SK-N-SH (cell line): ENCODE measurements at regions of chr17 and their contacts with region 1.

Region 1: DNA sequence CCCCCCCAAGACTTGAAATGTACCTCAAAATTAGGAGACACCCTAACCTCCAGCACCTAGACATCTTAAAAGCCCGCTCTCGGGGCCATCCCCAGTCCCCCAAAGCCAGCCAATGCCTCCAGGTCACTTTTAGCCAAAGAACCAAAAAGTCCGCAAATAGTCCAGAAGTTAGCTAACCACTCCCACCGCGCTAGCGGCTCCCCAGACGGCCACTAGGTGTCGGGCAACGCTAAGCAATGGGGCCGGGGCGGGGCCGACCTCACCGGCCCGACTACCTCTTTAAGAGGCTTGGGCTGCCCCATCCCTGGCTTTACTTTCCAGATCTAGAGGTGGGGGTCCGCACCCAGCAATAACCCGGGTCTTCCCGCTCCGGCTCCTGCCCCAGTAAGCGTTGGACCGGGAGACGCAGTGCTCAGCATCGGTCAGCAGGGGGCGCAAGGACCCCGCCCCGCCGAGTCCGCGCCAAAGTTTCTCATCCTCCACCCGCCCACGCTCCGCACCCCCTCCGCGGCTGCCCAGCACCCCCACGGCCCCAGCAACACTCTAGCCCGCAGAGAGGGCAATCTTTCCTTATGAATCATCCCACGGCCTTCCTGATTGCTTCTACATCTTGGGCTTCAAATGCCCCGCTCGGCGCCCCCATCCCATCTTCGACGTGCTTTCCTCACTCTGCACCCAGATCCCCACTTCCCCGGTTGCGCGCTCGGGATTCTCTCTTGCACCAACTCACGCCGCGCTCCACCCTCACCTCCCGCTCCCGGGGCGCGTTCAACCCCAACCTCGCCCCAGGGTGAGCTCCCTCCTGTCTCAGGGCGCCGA is 765 bp downstream of the COL1A1 start:
- DNase-seq: peak; percentile 95
- H3K4me3 ChIP-seq: peak overlapping the region; percentile 74 to 96
- H3K27ac ChIP-seq: peak overlapping the region; percentile 79 to 100
- H3K4me1 ChIP-seq: peaks cover 37 to 62% of the 10 kb centered on the region in 2 experiments
- H3K27me3 ChIP-seq: no peaks in the 10 kb centered on the region
- CTCF ChIP-seq: peak; percentile 100
- EP300 ChIP-seq: peak in 1 of 2 experiments; percentile 63; a peak in 2 of 4 replicates
- RAD21 ChIP-seq: peak; percentile 87

Region 2: GRCh38 chr17:49899191-49899485 is 301.5 kb before region 1 on chr17:
- CTCF ChIA-PET with region 1: no interaction called
- POLR2A ChIA-PET with region 1: no interaction called
- DNase-seq: no peak
- H3K4me3 ChIP-seq: no peak overlapping the region
- H3K27ac ChIP-seq: no peak overlapping the region
- H3K4me1 ChIP-seq: no peaks in the 10 kb centered on the region; a peak in 1 of 4 replicates
- H3K27me3 ChIP-seq: peaks cover 98% of the 10 kb centered on the region
- CTCF ChIP-seq: peak; percentile 35
- EP300 ChIP-seq: no peak
- RAD21 ChIP-seq: no peak; the same call in 1 of the 2 replicates

Region 3: DNA sequence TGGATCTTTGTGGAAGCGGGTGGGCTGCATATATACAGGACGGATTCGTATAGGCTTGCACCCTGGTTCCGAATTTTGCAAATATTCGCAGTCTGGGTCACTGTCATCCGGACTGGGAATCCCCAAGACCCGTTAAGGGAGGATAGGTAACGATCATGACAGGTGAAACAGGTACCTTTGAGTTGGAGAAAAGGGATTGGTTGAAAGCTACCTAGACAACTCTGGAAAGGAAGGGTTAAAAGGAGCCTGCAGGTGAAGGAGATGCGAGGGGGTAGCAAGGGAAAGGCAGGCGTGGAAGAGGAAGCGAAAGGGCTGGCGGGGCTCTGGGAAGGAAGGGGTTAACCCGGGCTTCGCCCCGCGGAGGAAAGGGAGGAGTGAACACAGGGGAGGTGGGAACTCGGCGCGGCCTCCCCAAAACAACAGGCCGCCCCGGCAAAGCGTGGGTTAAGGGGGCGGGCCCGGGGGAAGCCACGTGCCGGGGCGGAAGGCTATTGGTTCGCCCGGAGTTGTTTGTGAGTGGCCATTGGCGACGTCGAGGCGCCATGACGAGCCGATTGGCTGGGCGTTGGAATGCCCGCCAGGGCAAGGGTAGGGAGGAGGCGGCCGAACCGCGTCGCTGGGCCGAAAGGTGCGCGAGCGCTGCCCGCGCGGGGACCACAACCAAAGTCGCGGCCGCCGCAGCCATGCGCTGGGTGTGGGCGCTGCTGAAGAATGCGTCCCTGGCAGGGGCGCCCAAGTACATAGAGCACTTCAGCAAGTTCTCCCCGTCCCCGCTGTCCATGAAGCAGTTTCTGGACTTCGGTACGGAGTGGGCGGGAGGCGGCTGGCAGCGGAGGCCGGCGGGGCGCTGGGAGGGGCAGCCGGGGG is 105.7 kb before region 1 on chr17 and contains the start of gene PDK2:
- CTCF ChIA-PET with region 1: interaction called, 14 read pairs
- POLR2A ChIA-PET with region 1: no interaction called
- DNase-seq: peak; percentile 100
- H3K4me3 ChIP-seq: peak within 1 kb of the TSS; percentile 75 to 84
- H3K27ac ChIP-seq: peak within 1 kb of the TSS; percentile 64 to 83
- H3K4me1 ChIP-seq: peaks cover 3 to 18% of the 10 kb centered on the region in 2 experiments; a peak in 1 of 4 replicates
- H3K27me3 ChIP-seq: no peaks in the 10 kb centered on the region
- CTCF ChIP-seq: no peak
- EP300 ChIP-seq: peak in 1 of 2 experiments; percentile 5; a peak in 1 of 4 replicates
- RAD21 ChIP-seq: no peak
- polyA plus RNA-seq, gene PDK2: 96.1 and 124 TPM in 2 replicates

Region 4: GRCh38 chr17:50161023-50161910 is 39.4 kb before region 1 on chr17:
- CTCF ChIA-PET with region 1: interaction called, 517 read pairs
- POLR2A ChIA-PET with region 1: interaction called, 3 read pairs
- DNase-seq: peak; percentile 100
- H3K4me3 ChIP-seq: peak overlapping the region; percentile 60 to 72
- H3K27ac ChIP-seq: peak overlapping the region; percentile 3 to 91; a peak in 3 of 4 replicates
- H3K4me1 ChIP-seq: peaks cover 3 to 10% of the 10 kb centered on the region in 2 experiments; a peak in 1 of 4 replicates
- H3K27me3 ChIP-seq: no peaks in the 10 kb centered on the region
- CTCF ChIP-seq: peak; percentile 97
- EP300 ChIP-seq: peak in 1 of 2 experiments; percentile 44; a peak in 1 of 4 replicates
- RAD21 ChIP-seq: peak; percentile 72

Region 5: GRCh38 chr17:50213026-50214022 is 12.7 kb after region 1 on chr17:
- CTCF ChIA-PET with region 1: interaction called, 195 read pairs
- POLR2A ChIA-PET with region 1: interaction called, 3 read pairs
- DNase-seq: peak; percentile 56
- H3K4me3 ChIP-seq: no peak overlapping the region
- H3K27ac ChIP-seq: no peak overlapping the region
- H3K4me1 ChIP-seq: peaks cover 43 to 65% of the 10 kb centered on the region in 2 experiments
- H3K27me3 ChIP-seq: no peaks in the 10 kb centered on the region
- CTCF ChIP-seq: peak; percentile 55
- EP300 ChIP-seq: no peak
- RAD21 ChIP-seq: peak; percentile 39; the same call in 1 of the 2 replicates

Region 6: GRCh38 chr17:50279181-50279526 is 78.5 kb after region 1 on chr17:
- CTCF ChIA-PET with region 1: interaction called, 2,150 read pairs
- POLR2A ChIA-PET with region 1: no interaction called
- DNase-seq: no peak
- H3K4me3 ChIP-seq: no peak overlapping the region
- H3K27ac ChIP-seq: peak overlapping the region; percentile 20; a peak in 2 of 4 replicates
- H3K4me1 ChIP-seq: peaks cover 7 to 26% of the 10 kb centered on the region in 2 experiments; a peak in 3 of 4 replicates
- H3K27me3 ChIP-seq: no peaks in the 10 kb centered on the region
- CTCF ChIP-seq: no peak
- EP300 ChIP-seq: no peak; a peak in 1 of 4 replicates
- RAD21 ChIP-seq: no peak

Region 7: GRCh38 chr17:50337987-50338386 is 137.3 kb after region 1 on chr17:
- CTCF ChIA-PET with region 1: interaction called, 11 read pairs
- POLR2A ChIA-PET with region 1: no interaction called
- DNase-seq: no peak
- H3K4me3 ChIP-seq: no peak overlapping the region
- H3K27ac ChIP-seq: no peak overlapping the region
- H3K4me1 ChIP-seq: no peaks in the 10 kb centered on the region
- H3K27me3 ChIP-seq: no peaks in the 10 kb centered on the region
- CTCF ChIP-seq: no peak
- EP300 ChIP-seq: no peak
- RAD21 ChIP-seq: no peak

Region 8: GRCh38 chr17:50478391-50479381 is 278.0 kb after region 1 on chr17 and contains the start of gene RSAD1:
- CTCF ChIA-PET with region 1: interaction called, 17 read pairs
- POLR2A ChIA-PET with region 1: no interaction called
- DNase-seq: peak; percentile 98
- H3K4me3 ChIP-seq: peak within 1 kb of the TSS; percentile 80 to 90
- H3K27ac ChIP-seq: peak within 1 kb of the TSS; percentile 79 to 88
- H3K4me1 ChIP-seq: peaks cover 10 to 17% of the 10 kb centered on the region in 2 experiments; a peak in 2 of 4 replicates
- H3K27me3 ChIP-seq: no peaks in the 10 kb centered on the region
- CTCF ChIP-seq: peak; percentile 94
- EP300 ChIP-seq: peak; percentile 20 to 32; a peak in 2 of 4 replicates
- RAD21 ChIP-seq: peak; percentile 53
- polyA plus RNA-seq, gene RSAD1: 44.7 and 58.9 TPM in 2 replicates